Psoas muscle (tissue), 8 donors: ENCODE measurements at regions of chr1 and their contacts with region 1.

Region 1: DNA sequence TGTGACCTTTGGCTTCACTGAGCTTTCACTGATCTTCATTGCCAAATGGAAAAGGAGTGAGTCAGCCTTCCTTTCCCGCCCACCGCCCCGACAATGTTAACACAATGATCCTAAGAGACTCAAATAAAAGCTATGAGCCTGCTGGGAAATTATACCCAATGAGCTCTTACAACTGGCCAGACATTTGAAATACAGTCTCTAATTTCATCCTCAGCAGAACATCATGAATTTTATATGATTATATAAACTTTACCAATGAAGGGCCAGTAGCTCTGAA is 252.5 kb downstream of the SIPA1L2 start:
- DNase-seq: no peak
- ATAC-seq: peak; percentile 19 to 69 (median 46)
- H3K4me3 ChIP-seq: no peak overlapping the region
- H3K27ac ChIP-seq: peak overlapping the region; percentile 25
- H3K4me1 ChIP-seq: peaks cover 27% of the 10 kb centered on the region
- H3K27me3 ChIP-seq: no peaks in the 10 kb centered on the region
- CTCF ChIP-seq: no peak

Region 2: DNA sequence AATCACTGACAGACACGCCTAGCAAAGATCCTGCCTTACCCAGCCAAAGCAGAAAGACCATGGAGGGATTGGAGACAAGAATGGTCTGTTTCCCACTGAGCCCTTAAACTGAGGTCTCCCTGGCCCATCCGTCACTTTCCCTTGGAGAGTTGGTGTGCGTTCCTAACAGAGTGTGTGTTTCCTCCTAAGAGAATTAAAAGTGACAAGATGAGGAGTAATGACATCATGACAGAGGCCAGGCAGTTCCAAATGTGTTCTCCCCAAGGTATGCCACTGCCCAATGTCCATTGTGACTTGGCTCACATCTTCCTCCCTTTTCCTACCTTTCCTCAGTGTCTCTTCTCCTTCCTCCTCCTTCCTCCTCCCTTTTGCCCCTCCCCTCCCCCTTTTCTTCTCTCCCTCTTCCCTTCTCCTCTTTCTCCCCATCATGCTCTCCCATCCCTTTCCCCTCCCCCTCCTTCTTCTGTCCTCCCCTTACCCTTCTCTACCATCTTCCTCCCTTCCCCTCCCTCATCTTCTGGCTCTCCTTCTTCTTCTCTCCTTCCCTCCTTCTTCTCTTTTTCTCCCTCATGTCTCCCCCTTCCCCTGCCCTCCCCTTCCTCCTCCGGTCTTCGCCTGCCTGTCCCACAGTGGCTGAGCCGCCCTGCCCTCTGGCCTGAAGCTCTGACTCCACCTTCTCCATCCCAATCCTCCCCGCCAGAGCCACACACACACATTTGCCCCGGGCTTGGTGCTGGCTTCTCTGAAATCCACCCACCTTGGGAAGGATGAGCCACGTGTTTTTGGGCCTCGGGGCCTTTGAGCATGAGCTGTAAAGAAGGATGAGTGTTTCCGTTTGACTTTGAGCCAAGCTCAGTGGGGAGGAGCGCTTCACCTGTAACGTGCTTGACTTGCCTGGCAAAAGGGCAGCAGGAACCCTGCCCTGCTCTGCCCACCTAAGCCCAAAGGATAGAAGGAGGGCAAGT is 42.9 kb before region 1 on chr1:
- intact Hi-C with region 1: loop called in 1 of 2 experiments (anchors 5 kb)
- DNase-seq: no peak
- ATAC-seq: no peak
- H3K4me3 ChIP-seq: no peak overlapping the region
- H3K27ac ChIP-seq: no peak overlapping the region
- H3K4me1 ChIP-seq: no peaks in the 10 kb centered on the region
- H3K27me3 ChIP-seq: peaks cover 0 to 3% (median 0%) of the 10 kb centered on the region in 3 donors
- CTCF ChIP-seq: no peak

Region 3: GRCh38 chr1:232355162-232356004 is 22.0 kb before region 1 on chr1:
- intact Hi-C with region 1: no loop called
- DNase-seq: no peak
- ATAC-seq: no peak
- H3K4me3 ChIP-seq: no peak overlapping the region
- H3K27ac ChIP-seq: no peak overlapping the region
- H3K4me1 ChIP-seq: no peaks in the 10 kb centered on the region
- H3K27me3 ChIP-seq: no peaks in the 10 kb centered on the region
- CTCF ChIP-seq: no peak

Region 4: DNA sequence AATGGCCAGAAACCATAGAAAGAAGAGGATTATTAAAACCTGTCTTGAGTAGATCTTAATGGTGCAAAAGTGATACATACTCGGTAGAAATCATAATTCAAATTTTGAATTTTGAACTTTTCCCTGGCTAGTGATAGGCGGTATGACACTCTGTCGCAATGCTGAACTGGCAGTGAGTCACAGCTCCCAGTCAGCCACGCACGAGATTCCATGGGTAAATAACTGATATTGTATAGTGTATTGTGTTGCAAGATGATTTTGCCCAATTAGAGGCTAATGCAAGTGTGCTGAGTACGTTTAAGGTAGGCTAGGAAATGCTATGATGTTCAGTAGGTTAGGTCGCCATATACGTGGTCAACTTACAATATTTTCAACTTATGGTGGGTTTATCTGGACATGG is 45.5 kb after region 1 on chr1:
- intact Hi-C with region 1: no loop called
- DNase-seq: no peak
- ATAC-seq: no peak
- H3K4me3 ChIP-seq: no peak overlapping the region
- H3K27ac ChIP-seq: no peak overlapping the region
- H3K4me1 ChIP-seq: no peaks in the 10 kb centered on the region
- H3K27me3 ChIP-seq: no peaks in the 10 kb centered on the region
- CTCF ChIP-seq: no peak